GM12878 (cell line): ENCODE measurements at regions of chr2 and their contacts with region 1.

Region 1: DNA sequence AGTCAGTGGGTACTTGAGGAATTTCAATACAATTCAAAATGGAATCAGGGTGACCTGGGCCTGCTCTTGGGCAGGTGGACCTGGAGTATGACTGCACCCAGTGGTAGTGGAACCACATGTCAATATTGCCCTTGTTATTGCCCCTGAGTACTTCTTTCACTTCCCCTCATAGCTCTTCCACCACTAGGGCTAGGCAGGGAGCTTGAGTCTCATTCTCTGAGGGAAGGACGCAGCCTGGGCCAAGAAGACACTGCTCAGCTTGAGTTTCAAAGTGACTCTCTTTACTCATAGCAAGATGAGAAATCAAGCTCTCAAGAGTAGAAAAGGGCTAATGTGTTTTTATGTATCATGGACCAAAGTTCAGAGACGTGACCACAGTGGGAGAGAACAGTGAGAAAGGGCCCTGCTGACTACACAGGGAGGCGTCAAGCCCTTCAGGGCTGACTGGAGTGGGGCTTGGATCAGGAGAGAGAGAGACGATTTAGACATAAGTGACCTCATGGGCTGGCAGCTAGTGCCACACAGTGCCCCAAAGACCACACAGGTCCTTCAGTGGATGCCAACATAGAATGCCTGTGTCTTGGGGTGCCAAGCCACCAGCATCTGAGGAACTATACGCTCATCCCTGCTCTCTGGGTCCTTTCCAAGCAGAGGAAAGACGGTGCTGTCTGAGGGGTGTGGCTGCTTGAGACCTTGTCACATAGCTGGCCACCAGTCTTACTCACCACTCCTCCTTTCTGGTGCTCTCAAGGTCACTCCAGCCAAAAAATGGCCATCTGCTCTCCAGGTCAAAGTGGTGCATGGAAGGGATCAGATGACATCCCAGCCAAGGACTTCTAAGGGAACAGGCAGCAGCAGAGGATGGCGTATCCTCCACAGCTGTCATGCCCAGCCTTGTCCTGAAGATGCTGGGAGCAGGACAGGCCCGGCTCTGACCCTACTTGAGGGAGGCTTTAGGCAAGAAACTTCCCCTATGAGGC is 13.0 kb downstream of the PTMA start:
- DNase-seq: peak; percentile 80
- ATAC-seq: peak; percentile 93
- H3K4me3 ChIP-seq: no peak overlapping the region
- H3K27ac ChIP-seq: peak overlapping the region; percentile 71
- H3K4me1 ChIP-seq: peaks cover 26% of the 10 kb centered on the region
- H3K27me3 ChIP-seq: no peaks in the 10 kb centered on the region
- CTCF ChIP-seq: peak; percentile 23 to 43 (median 28); a peak in 4 of 6 replicates
- EP300 ChIP-seq: peak in 1 of 2 experiments; percentile 52; a peak in 1 of 4 replicates
- POLR2A ChIP-seq: peak; percentile 39; the same call in 1 of the 2 replicates
- RAD21 ChIP-seq: 0 out of 2 replicates have a peak, but pooled peaks have one; percentile 42

Region 2: GRCh38 chr2:231769170-231770136 is 48.2 kb after region 1 on chr2:
- CTCF ChIA-PET with region 1: interaction called, 25 read pairs
- POLR2A ChIA-PET with region 1: interaction called, 7 read pairs
- RAD21 ChIA-PET with region 1: interaction called, 6 read pairs
- SMC1A ChIA-PET with region 1: interaction called, 14 read pairs
- in situ Hi-C with region 1: no loop called
- intact Hi-C with region 1: no loop called
- DNase-seq: peak; percentile 51
- ATAC-seq: peak; percentile 81
- H3K4me3 ChIP-seq: peak overlapping the region; percentile 16; the same call in 1 of the 2 replicates
- H3K27ac ChIP-seq: peak overlapping the region; percentile 76
- H3K4me1 ChIP-seq: peaks cover 32% of the 10 kb centered on the region
- H3K27me3 ChIP-seq: no peaks in the 10 kb centered on the region
- CTCF ChIP-seq: peak in 1 of 3 experiments; percentile 30; a peak in 2 of 6 replicates
- EP300 ChIP-seq: peak in 1 of 2 experiments; percentile 38; a peak in 1 of 4 replicates
- POLR2A ChIP-seq: no peak
- RAD21 ChIP-seq: peak; percentile 29; the same call in 1 of the 2 replicates